ENCODE measurements at regions of chr11 and their contacts with region 1.

Region 1: DNA sequence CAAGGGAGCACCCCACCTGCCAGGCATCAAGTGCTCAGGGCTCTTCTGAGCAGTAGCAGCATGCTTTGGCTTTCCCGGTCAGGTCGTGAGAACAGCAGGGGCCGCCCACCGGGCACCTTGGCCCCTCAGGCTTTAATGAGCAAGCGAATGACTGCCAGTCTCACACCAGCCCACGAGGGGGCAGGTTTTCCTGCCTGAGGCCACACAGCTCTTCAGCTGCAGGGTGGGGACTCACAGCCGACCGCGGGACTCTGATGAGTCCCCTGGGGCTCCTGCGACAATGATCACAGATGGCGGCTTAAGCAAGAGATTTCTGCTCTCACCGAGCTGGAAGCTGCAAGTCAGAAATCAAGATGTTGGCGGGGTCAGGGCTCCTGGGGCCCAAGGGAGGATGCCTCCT is 14.3 kb upstream of the FGF19 start:
- DNase-seq: no peak
- ATAC-seq: peak; percentile 83
- H3K4me3 ChIP-seq: no peak overlapping the region
- H3K27ac ChIP-seq: no peak overlapping the region
- H3K4me1 ChIP-seq: peaks cover 7 to 19% of the 10 kb centered on the region in 2 experiments; a peak in 3 of 4 replicates
- H3K27me3 ChIP-seq: no peaks in the 10 kb centered on the region
- CTCF ChIP-seq: peak; percentile 72 to 81 (median 78)
- POLR2A ChIP-seq: no peak
- RAD21 ChIP-seq: peak; percentile 73

Region 2: DNA sequence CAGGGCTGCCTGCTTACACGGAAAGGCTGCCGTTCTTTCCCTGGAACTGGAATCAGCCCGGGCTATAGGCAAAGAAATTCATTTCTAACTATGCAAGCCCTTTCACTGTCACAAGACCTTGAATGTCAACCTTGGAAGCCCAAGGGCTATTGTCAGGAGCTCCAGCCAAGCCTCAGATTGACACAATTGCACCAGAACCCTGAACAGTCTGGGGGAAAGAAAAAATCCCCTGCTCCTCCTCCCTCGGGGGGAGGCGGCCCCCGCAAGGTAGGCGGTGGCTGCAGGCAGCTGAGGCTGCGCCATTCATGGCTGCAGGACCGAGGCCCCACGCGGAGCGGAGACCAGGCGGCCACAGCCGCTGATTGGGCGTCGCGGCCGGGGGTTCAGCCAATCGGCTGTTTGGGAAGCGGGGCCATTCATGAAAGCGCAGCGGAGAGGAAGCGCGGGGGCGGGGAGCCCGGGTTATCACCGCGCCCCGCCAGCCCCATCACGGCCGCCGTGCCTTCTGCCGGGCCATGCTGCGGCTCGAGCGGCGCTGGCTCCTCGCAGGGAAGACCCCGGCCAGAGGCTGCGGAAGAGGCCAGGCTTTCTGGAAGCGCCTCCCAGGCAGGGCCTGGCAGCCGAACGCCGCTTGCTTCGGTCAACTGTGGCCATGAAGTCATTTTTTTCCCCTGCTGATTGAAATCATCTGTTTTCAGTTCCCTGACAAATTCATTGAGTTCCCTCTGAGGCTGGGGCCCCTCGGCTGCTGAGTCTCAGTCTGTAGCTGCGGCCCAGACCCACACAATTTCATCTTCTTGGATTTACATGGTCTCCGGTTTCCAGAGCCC is 274.8 kb before region 1 on chr11:
- CTCF ChIA-PET with region 1: no interaction called
- POLR2A ChIA-PET with region 1: no interaction called
- RAD21 ChIA-PET with region 1: no interaction called
- intact Hi-C with region 1: no loop called
- DNase-seq: peak; percentile 74
- ATAC-seq: peak; percentile 98
- H3K4me3 ChIP-seq: peak overlapping the region; percentile 47 to 57
- H3K27ac ChIP-seq: peak overlapping the region; percentile 63
- H3K4me1 ChIP-seq: peaks cover 18 to 36% of the 10 kb centered on the region in 2 experiments
- H3K27me3 ChIP-seq: no peaks in the 10 kb centered on the region
- CTCF ChIP-seq: no peak
- POLR2A ChIP-seq: peak; percentile 33
- RAD21 ChIP-seq: no peak; the same call in 1 of the 2 replicates

Region 3: GRCh38 chr11:69801519-69802335 is 83.6 kb after region 1 on chr11:
- CTCF ChIA-PET with region 1: interaction called, 3 read pairs
- POLR2A ChIA-PET with region 1: no interaction called
- RAD21 ChIA-PET with region 1: interaction called in 1 of 2 experiments, 3 read pairs
- intact Hi-C with region 1: loop called (anchors 5 kb)
- DNase-seq: peak; percentile 64
- ATAC-seq: peak; percentile 64
- H3K4me3 ChIP-seq: no peak overlapping the region
- H3K27ac ChIP-seq: no peak overlapping the region
- H3K4me1 ChIP-seq: peaks cover 2 to 27% of the 10 kb centered on the region in 2 experiments; a peak in 3 of 4 replicates
- H3K27me3 ChIP-seq: no peaks in the 10 kb centered on the region
- CTCF ChIP-seq: peak; percentile 68 to 98 (median 97)
- POLR2A ChIP-seq: no peak
- RAD21 ChIP-seq: peak; percentile 70

Region 4: DNA sequence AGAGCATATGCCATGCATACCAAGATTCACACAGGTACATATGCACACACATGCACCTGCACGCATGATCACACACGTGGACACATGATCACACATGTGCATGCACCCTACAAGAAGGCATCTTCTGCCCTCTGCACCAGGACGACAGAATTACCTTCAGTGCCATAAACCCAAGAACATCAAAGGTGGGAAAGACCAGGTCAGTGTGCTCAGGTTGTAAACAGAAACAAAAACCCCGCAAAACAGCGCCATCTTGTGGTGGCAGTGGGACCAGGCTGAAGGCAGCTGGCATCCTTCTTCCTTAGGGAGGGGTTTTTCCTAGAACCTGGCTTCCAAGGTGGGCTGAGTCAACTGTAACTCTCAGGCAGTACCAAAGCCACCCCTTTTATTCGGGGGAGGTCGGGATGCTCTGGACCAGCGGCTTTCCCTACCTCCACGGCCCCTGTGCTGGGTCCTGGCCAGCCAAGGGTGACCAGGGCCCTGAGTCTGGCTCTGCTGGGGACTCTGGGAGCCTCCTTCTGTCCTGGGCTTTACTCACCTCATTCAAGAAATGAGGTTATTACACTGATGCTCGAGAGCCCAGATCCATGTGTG is 170.4 kb after region 1 on chr11:
- CTCF ChIA-PET with region 1: interaction called, 5 read pairs
- POLR2A ChIA-PET with region 1: no interaction called
- RAD21 ChIA-PET with region 1: no interaction called
- intact Hi-C with region 1: loop called (anchors 1 kb)
- DNase-seq: peak; percentile 57
- ATAC-seq: peak; percentile 89
- H3K4me3 ChIP-seq: no peak overlapping the region
- H3K27ac ChIP-seq: no peak overlapping the region
- H3K4me1 ChIP-seq: peaks cover 0 to 5% of the 10 kb centered on the region in 2 experiments; a peak in 1 of 4 replicates
- H3K27me3 ChIP-seq: no peaks in the 10 kb centered on the region
- CTCF ChIP-seq: peak; percentile 90 to 97 (median 97)
- POLR2A ChIP-seq: no peak
- RAD21 ChIP-seq: peak; percentile 93